ENCODE measurements at regions of chr2 and their contacts with region 1.

Region 1: GRCh38 chr2:130332271-130333073 is 10.2 kb upstream of the IMP4 start:
- H3K4me3 Mint-ChIP-seq: no peak overlapping the region
- H3K27ac Mint-ChIP-seq: no peak overlapping the region
- H3K4me1 Mint-ChIP-seq: no peaks in the 10 kb centered on the region
- H3K27me3 Mint-ChIP-seq: peaks cover 38% of the 10 kb centered on the region

Region 2: GRCh38 chr2:129936334-129936934 is 396.0 kb before region 1 on chr2:
- intact Hi-C with region 1: loop called (anchors 1 kb)
- H3K4me3 Mint-ChIP-seq: no peak overlapping the region
- H3K27ac Mint-ChIP-seq: no peak overlapping the region
- H3K4me1 Mint-ChIP-seq: no peaks in the 10 kb centered on the region
- H3K27me3 Mint-ChIP-seq: peaks cover 34% of the 10 kb centered on the region

Region 3: DNA sequence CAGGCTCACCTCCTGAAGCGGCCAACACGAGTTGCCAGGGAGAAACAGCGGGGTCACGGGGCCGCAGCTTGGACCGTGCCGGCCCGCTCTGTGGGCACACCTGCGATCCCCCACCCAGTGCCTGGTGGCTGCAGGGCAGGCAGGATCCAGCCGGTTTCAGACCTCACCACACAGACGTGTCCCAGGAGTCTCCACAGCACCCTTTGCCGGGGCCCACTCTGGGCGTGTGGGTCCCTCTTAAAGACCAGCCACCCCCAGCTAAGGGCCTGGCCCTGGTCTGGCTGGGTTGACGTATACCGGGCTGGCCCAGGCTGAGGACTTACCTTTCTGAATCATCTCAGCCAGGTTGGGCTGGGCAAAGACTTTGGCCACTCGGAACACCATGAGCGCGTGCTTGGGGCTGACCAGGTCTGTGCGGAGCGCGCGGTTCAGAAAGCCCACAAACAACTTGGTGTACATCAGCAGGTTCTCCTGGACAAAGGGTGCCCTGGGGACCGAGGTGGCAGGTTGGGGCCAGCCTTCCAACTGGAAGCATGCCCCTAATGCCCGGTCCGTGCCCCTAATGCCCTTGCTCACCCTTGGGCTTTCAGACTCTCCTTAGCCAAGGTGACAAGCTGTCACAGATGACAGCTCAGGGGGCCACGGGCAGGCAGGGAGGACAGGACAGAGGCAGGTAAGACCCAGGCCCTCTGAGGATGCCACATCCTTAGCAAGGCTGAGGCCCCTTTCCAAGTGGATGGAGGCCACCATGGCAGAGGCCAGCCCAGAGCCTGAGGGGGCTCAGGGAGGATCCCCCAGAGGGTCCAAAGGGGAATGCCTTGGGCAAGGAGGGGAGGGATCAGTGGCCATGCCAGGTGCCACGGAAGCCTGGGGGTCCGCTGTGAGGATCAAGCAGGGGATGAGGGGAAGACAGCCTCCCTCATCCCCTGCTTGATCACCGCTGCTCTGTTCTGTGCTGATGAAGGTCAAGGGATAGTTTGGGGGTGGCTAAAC is 177.4 kb before region 1 on chr2:
- intact Hi-C with region 1: loop called (anchors 5 kb)
- H3K4me3 Mint-ChIP-seq: no peak overlapping the region
- H3K27ac Mint-ChIP-seq: no peak overlapping the region
- H3K4me1 Mint-ChIP-seq: peaks cover 11% of the 10 kb centered on the region
- H3K27me3 Mint-ChIP-seq: no peaks in the 10 kb centered on the region